Activated T-helper 2 cell treated with anti-CD3 and anti-CD28 coated beads, Interferon-gamma antibody, Interleukin-2, Interleukin-4, amounts not matched to agents 10 μg/mL and 5 μg/mL and 100 μg/mL, durations not matched to agents 14 hours and 24 hours and 36 hours (primary cell): ENCODE measurements at regions of chr3 and their contacts with region 1.

Region 1: DNA sequence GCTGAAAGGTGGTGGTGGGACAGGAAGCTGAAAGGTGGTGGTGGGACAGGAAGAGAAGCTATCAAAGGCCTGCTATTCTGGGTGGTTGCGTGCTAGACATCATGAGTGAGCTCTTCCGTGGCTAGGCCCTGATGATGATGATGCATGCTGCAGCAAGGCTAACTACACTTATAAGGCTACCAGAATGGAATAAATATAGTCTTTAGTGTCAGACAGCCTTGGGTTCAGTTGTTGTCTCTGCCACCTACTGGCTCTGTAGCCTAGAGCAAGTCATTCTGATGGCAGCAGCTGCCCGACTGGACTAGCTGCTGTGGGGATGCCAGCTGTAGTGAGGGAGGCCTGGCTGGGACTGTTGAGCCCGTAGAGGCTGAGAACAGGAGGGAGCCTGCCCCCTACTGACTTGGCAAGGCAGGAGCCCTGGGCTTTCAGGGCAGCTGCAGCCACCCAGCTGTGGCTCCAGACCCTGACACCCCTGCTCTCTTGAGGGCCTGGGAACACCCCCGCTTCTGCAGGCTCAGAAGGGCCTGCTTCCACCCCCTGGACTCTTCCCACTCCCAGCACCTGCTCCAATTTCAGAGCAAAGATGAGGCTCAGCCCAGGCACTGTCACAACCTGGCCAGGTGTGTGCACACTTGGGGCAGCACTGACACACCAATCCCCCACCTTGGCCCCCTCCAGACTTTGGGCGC is 21.4 kb upstream of the ZBED2 start:
- DNase-seq: peak; percentile 51
- H3K4me3 Mint-ChIP-seq: peak overlapping the region; percentile 27
- H3K27ac Mint-ChIP-seq: peak overlapping the region; percentile 92
- H3K4me1 Mint-ChIP-seq: peaks cover 74% of the 10 kb centered on the region
- H3K27me3 Mint-ChIP-seq: no peaks in the 10 kb centered on the region

Region 2: GRCh38 chr3:111311709-111312235 is 304.8 kb before region 1 on chr3:
- intact Hi-C with region 1: loop called (anchors 10 kb)
- DNase-seq: no peak
- H3K4me3 Mint-ChIP-seq: peak overlapping the region; percentile 18
- H3K27ac Mint-ChIP-seq: peak overlapping the region; percentile 77
- H3K4me1 Mint-ChIP-seq: peaks cover 39% of the 10 kb centered on the region
- H3K27me3 Mint-ChIP-seq: no peaks in the 10 kb centered on the region

Region 3: DNA sequence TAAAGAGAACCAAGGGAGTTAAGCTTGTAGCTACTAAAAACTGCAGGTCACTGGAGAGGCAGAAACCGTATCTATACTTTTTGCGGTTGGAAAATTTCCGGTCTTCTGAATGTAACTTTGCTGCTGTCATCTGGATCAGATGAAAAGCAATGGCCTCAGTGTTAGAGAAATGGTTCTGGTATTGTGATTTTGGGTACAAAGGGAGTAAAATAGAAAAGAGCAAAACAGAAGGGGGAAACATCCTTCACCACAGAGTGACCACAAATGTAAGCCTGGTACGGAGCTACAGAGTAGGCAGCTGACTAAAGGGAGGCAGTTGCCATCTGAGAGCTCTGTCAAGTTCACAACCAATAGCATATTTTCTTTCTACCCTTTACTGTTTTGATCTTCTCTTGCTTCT is 68.9 kb before region 1 on chr3:
- intact Hi-C with region 1: loop called (anchors 1 kb)
- DNase-seq: peak; percentile 40
- H3K4me3 Mint-ChIP-seq: no peak overlapping the region
- H3K27ac Mint-ChIP-seq: no peak overlapping the region
- H3K4me1 Mint-ChIP-seq: peaks cover 40% of the 10 kb centered on the region
- H3K27me3 Mint-ChIP-seq: no peaks in the 10 kb centered on the region

Region 4: GRCh38 chr3:111595232-111595631 is 21.3 kb before region 1 on chr3 and contains the start of gene ZBED2:
- intact Hi-C with region 1: loop called (anchors 1 kb)
- DNase-seq: no peak
- H3K4me3 Mint-ChIP-seq: peak within 1 kb of the TSS; percentile 97
- H3K27ac Mint-ChIP-seq: peak within 1 kb of the TSS; percentile 95
- H3K4me1 Mint-ChIP-seq: peaks cover 53% of the 10 kb centered on the region
- H3K27me3 Mint-ChIP-seq: no peaks in the 10 kb centered on the region
- total RNA-seq, gene ZBED2: 543 and 546 TPM in 2 replicates

Region 5: DNA sequence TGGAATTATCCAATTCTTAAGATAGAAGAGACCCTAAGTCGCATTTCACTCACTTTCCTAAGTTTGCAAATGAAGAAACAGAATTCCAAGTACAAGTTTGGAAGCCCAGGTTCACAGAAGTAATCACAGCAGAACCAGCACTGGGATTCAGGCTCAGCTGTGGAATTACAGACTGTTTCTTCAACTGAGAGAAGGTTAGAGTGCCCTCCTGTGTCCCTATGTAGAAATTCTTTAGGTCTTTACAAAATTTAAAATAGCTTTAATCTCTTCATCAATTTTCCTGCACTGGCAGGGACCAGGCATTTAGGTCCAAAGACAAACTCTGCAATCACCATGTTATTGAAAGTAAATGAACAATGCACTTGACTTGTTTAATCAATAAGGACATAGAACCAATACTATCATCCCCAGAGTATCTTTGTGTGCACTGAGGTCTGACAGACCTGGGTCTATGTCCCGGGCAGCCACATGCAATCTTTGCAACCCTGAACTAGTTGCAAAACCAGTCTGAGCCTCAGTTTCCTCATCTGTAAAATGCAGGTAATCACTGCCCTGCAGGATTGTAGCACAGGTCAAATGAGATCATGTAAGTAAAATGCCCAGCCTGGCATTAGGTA is 74.8 kb after region 1 on chr3:
- intact Hi-C with region 1: loop called (anchors 2 kb)
- DNase-seq: no peak
- H3K4me3 Mint-ChIP-seq: no peak overlapping the region
- H3K27ac Mint-ChIP-seq: no peak overlapping the region
- H3K4me1 Mint-ChIP-seq: peaks cover 56% of the 10 kb centered on the region
- H3K27me3 Mint-ChIP-seq: no peaks in the 10 kb centered on the region

Region 6: DNA sequence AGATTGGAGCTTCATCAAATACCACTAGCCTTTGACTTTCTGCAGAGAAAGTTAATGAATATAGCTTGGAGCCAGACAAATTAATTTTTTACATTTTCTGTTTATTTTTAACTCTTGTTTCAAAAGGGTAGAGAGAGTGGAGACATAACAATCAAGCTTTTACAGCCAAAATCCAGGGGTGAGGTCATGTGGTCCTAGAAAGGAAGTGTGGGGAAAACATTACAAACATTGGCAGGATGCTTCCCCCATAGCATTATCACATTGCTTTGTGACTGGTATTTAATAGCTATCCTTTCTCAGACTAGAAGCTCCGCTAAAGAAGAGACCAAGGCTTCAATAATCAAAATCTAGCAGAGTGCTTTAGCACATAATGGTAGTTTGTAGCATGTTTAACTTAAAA is 196.1 kb after region 1 on chr3:
- intact Hi-C with region 1: no loop called
- DNase-seq: no peak
- H3K4me3 Mint-ChIP-seq: no peak overlapping the region
- H3K27ac Mint-ChIP-seq: no peak overlapping the region
- H3K4me1 Mint-ChIP-seq: no peaks in the 10 kb centered on the region
- H3K27me3 Mint-ChIP-seq: no peaks in the 10 kb centered on the region